Ascending aorta (tissue), 2 donors: ENCODE measurements at regions of chr6 and their contacts with region 1.

Region 1: GRCh38 chr6:135054569-135055498 is at the start of gene HBS1L:
- DNase-seq: peak; percentile 84 to 98
- H3K4me3 ChIP-seq: peak within 1 kb of the TSS; percentile 87 to 94
- H3K27ac ChIP-seq: peak within 1 kb of the TSS; percentile 87 to 90
- H3K4me1 ChIP-seq: no peaks in the 10 kb centered on the region
- H3K27me3 ChIP-seq: no peaks in the 10 kb centered on the region
- CTCF ChIP-seq: no peak
- total RNA-seq, gene HBS1L: 9.8 TPM

Region 2: GRCh38 chr6:135180542-135181332 is 125.9 kb after region 1 on chr6 and contains the start of gene MYB:
- intact Hi-C with region 1: loop called (anchors 10 kb)
- DNase-seq: peak in 1 of 2 donors; percentile 64
- H3K4me3 ChIP-seq: peak within 1 kb of the TSS; percentile 68 to 86
- H3K27ac ChIP-seq: no peak within 1 kb of the TSS
- H3K4me1 ChIP-seq: peaks cover 14 to 18% of the 10 kb centered on the region in 2 donors
- H3K27me3 ChIP-seq: peaks cover 8% of the 10 kb centered on the region
- CTCF ChIP-seq: no peak
- total RNA-seq, gene MYB: not detected